Activated naive CD4-positive, alpha-beta T cell treated with anti-CD3 and anti-CD28 coated beads for 36 hours (primary cell): ENCODE measurements at regions of chr6 and their contacts with region 1.

Region 1: DNA sequence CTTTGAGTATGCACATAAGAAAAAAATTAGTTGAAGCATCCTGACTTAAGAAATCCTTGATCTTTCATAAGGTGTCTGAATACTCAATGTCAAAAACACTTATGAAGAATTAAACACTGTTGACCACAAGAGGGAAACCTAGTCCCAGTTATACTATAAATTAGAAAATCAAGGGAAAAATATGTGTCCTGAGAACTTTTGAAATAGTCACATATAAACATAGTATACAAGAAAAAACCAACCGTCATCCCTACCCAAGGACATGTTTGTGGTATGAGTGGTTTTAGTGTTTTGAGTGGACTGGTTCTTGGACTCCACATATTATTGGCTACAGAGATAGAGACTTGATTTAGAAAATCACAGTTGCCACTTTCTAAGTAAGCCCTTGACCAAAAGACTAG is 7.6 kb upstream of the HLA-DRA start:
- DNase-seq: no peak
- H3K4me3 Mint-ChIP-seq: no peak overlapping the region
- H3K27ac Mint-ChIP-seq: no peak overlapping the region
- H3K4me1 Mint-ChIP-seq: no peaks in the 10 kb centered on the region
- H3K27me3 Mint-ChIP-seq: peaks cover 2% of the 10 kb centered on the region

Region 2: GRCh38 chr6:32692019-32692418 is 260.0 kb after region 1 on chr6:
- CTCF ChIA-PET with region 1: interaction called, 7 read pairs
- intact Hi-C with region 1: loop called (anchors 1 kb)
- DNase-seq: peak; percentile 81
- H3K4me3 Mint-ChIP-seq: no peak overlapping the region
- H3K27ac Mint-ChIP-seq: no peak overlapping the region
- H3K4me1 Mint-ChIP-seq: peaks cover 3% of the 10 kb centered on the region
- H3K27me3 Mint-ChIP-seq: peaks cover 9% of the 10 kb centered on the region

Region 3: GRCh38 chr6:32700391-32701040 is 268.5 kb after region 1 on chr6:
- CTCF ChIA-PET with region 1: interaction called, 5 read pairs
- intact Hi-C with region 1: loop called (anchors 1 kb)
- DNase-seq: peak; percentile 30
- H3K4me3 Mint-ChIP-seq: no peak overlapping the region
- H3K27ac Mint-ChIP-seq: no peak overlapping the region
- H3K4me1 Mint-ChIP-seq: peaks cover 2% of the 10 kb centered on the region
- H3K27me3 Mint-ChIP-seq: peaks cover 24% of the 10 kb centered on the region

Region 4: GRCh38 chr6:32785781-32786533 is 353.9 kb after region 1 on chr6:
- CTCF ChIA-PET with region 1: interaction called, 6 read pairs
- intact Hi-C with region 1: loop called (anchors 1 kb)
- DNase-seq: peak; percentile 49
- H3K4me3 Mint-ChIP-seq: no peak overlapping the region
- H3K27ac Mint-ChIP-seq: no peak overlapping the region
- H3K4me1 Mint-ChIP-seq: no peaks in the 10 kb centered on the region
- H3K27me3 Mint-ChIP-seq: peaks cover 13% of the 10 kb centered on the region

Region 5: GRCh38 chr6:32796848-32797776 is 365.1 kb after region 1 on chr6:
- CTCF ChIA-PET with region 1: interaction called, 6 read pairs
- intact Hi-C with region 1: loop called (anchors 5 kb)
- DNase-seq: peak; percentile 91
- H3K4me3 Mint-ChIP-seq: peak overlapping the region; percentile 47
- H3K27ac Mint-ChIP-seq: no peak overlapping the region
- H3K4me1 Mint-ChIP-seq: peaks cover 22% of the 10 kb centered on the region
- H3K27me3 Mint-ChIP-seq: peaks cover 20% of the 10 kb centered on the region